Posterior vena cava (tissue), 2 donors: ENCODE measurements at regions of chr4 and their contacts with region 1.

Region 1: GRCh38 chr4:3484986-3485791 is 22.1 kb downstream of the DOK7 start:
- DNase-seq: no peak

Region 2: GRCh38 chr4:3452376-3452775 is 32.8 kb before region 1 on chr4:
- intact Hi-C with region 1: no loop called
- DNase-seq: no peak

Region 3: DNA sequence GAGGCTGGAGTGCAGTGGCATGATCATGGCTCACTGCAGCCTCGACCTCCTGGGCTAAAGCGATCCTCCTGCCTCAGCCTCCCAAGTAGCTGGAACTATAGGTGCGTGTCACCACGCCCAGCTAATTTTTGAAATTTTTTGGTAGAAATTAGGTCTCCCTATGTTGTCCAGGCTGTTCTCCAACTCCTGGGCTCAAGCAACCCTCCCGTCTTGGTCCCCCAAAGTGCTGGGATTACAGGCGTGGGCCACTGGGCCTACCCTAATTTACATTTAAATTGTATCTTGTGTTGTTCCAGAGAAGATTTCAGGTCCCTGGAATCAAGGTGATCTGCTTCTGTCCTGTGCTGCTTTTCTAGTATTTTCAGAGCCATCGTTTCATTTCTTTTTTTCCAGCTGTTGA is 48.2 kb after region 1 on chr4:
- intact Hi-C with region 1: no loop called
- DNase-seq: no peak

Region 4: GRCh38 chr4:3880615-3881120 is 395.5 kb after region 1 on chr4:
- intact Hi-C with region 1: loop called in 1 of 2 experiments (anchors 5 kb)
- DNase-seq: no peak

Region 5: DNA sequence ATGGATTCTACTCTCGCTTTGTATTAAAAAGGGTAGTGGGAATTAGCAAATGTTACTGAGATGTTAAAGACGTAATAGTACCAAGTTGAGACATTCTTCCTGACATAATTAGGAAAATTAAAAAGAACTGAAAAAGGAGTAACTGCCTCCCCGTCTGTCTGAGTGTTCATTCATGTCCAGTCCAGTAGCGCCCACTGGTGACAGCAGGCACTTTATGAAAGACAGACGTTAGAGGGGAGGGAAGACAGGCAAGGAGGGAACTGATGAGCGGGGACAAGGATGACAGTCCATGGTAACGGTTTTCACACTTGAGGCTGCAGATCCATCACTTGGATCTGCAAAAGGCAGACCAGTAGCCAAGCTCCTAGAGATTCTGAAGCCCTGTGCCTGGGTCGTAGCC is 1892.8 kb after region 1 on chr4:
- intact Hi-C with region 1: no loop called
- DNase-seq: no peak